ENCODE measurements at regions of chr16 and their contacts with region 1.

Region 1: DNA sequence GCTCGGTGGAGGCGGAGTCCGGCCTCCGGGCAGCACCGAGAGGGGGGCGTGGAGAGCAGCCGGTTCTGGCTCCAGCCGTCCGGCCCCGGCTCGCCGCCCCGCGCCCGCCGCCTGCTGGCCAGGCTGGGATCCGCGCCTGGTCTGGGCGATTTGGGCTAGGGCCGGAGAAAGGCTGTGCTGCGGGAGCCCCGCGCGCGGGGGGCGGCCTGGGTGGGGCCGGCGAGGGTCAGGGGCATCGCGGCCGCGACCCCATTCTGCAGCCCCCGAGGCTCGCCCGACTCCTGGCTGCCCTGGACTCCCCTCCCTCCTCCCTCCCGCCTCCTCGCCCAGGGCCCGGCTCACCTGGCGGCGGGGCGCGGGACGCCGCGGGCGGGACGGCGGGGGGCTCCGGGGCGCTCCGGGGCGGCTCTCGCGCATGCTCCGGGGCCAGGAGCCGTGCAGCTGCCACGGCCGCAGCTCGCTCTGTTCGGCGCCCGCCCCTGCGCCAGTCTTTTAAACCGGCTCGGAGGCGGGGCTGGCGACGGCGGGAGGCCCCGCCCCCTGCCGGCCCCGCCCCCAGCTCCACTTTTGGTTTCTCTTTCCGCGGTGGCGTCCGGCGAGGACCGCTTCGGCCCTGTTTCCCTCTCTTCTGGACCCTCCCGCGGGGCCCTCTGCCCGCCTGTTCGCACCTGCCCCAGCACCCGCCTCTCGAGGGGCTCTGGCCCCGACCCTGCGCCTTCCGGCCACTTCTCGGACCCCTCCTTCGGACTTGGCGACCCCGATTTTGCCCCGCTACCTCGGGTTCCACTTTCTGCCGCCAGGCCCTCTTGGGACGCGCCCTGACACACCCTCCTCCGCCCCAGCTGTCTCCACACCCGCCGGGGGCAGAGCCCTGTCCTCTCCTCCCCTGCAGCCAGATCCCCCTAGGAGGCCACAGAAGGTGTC is at the start of gene SOCS1:
- DNase-seq: no peak
- H3K4me3 ChIP-seq: peak within 1 kb of the TSS; percentile 62 to 97
- H3K27ac ChIP-seq: peak within 1 kb of the TSS; percentile 99
- H3K4me1 ChIP-seq: peaks cover 54% of the 10 kb centered on the region
- H3K27me3 ChIP-seq: no peaks in the 10 kb centered on the region
- CTCF ChIP-seq: peak; percentile 66 to 97 (median 72)
- POLR2A ChIP-seq: peak; percentile 53 to 98
- total RNA-seq, gene SOCS1: 22.1 TPM

Region 2: DNA sequence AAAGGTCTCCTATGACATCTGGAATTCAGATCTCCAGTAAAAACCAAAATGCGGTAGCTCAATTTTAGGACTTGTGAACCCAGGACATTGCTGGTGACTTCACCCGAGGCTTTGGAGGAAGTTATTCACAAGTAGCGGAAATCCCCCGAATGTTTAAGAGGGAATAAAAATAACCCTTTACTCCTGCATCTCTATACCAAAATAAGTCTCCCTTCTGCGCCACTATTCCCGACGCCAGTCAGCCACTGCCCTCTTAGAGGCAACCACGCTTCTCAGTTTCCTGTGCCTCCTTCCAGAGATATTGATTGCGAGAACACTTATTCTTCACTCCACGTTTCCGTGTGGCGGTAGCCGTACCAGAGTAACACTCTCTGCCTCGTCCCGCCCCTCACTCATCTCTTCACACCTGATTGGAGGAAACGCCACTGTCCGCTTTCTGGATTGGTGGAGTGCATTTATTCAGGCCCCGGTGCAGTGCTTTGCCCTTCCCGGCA is 703.0 kb before region 1 on chr16:
- intact Hi-C with region 1: loop called (anchors 10 kb)
- DNase-seq: no peak
- H3K4me3 ChIP-seq: no peak overlapping the region
- H3K27ac ChIP-seq: no peak overlapping the region
- H3K4me1 ChIP-seq: peaks cover 6% of the 10 kb centered on the region
- H3K27me3 ChIP-seq: no peaks in the 10 kb centered on the region
- CTCF ChIP-seq: no peak
- POLR2A ChIP-seq: no peak

Region 3: DNA sequence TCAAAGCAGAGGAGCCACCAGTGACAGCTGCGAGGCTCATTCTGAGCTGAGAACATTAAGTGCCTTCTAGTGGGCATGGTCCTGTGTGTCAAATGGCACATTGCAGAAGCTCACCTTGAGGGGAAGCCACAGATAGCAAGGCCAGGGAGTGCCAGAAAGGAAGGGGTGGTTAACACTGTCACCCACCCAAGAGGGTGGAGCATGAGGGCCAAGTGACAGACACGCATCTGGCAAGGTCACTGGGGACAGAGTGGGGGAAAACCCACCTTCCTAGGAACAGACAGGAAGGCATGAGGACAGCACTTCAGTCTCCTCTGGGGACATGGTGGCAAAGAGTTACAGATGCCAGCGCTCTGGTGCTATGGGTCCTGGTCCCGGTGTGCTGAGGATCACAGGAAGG is 490.2 kb before region 1 on chr16:
- intact Hi-C with region 1: no loop called
- DNase-seq: no peak
- H3K4me3 ChIP-seq: no peak overlapping the region
- H3K27ac ChIP-seq: no peak overlapping the region
- H3K4me1 ChIP-seq: no peaks in the 10 kb centered on the region
- H3K27me3 ChIP-seq: no peaks in the 10 kb centered on the region
- CTCF ChIP-seq: no peak
- POLR2A ChIP-seq: no peak

Region 4: DNA sequence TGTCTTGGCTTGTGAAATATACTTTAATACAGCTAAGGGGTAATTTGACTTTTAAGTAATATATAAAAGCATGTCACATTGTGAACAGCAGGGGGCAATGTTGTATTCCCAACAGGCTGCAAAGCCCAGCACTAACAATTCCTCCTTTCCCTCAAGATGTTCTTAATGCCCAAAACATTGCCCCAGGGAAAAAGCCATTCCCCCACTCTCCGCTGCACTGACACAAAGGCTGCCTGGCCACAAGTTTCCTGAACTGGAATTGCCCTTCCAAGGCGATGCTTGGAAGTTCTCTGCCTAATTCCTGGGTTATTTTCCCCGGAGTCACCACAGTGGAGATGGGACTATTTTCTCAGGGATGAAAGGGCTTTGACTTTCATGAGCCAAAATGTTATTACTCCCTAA is 284.4 kb before region 1 on chr16:
- intact Hi-C with region 1: loop called (anchors 2 kb)
- DNase-seq: no peak
- H3K4me3 ChIP-seq: no peak overlapping the region
- H3K27ac ChIP-seq: peak overlapping the region; percentile 53
- H3K4me1 ChIP-seq: peaks cover 9% of the 10 kb centered on the region
- H3K27me3 ChIP-seq: no peaks in the 10 kb centered on the region
- CTCF ChIP-seq: peak; percentile 64 to 92 (median 78)
- POLR2A ChIP-seq: no peak

Region 5: DNA sequence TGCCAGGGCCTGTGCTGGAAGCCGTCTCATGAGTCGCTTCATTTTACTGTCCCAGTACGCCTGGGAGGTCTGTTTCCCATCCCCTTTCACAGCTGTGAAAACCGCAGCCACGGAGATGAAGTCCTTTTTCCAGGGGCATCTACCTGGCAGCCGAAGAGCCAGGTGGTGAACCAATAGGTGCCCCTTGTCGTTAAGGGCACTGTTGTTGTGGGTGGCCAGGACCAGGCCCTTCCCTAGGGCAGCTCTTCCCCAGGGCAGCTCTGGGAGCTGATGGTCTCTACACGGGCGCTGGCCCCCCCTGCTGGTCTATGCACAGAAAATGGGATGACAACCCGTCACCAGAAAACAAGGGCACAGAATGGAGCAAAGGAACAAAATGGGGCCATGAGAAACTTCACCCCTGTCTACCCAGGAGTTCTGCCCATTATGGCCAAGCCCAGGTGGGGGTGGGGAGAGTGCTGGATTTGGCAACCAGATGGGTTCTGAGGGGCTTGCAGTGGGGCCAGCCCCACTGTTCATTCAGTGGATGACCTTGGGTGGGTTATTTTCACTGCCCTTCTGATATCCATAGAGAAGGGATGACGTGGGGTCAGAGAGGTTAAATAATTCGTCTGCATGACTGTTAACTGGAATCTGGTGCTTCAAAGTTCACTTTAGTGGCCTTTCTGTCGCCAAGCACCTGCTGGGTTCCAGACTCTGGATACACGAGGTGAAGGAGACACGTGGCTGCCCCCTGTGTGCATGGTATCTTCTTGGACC is 100.8 kb after region 1 on chr16:
- intact Hi-C with region 1: loop called (anchors 5 kb)
- DNase-seq: no peak
- H3K4me3 ChIP-seq: no peak overlapping the region
- H3K27ac ChIP-seq: peak overlapping the region; percentile 65
- H3K4me1 ChIP-seq: peaks cover 73% of the 10 kb centered on the region
- H3K27me3 ChIP-seq: no peaks in the 10 kb centered on the region
- CTCF ChIP-seq: peak; percentile 19 to 47 (median 46)
- POLR2A ChIP-seq: no peak